Dorsolateral prefrontal cortex (tissue), 120 donors: ENCODE measurements at regions of chr6 and their contacts with region 1.

Region 1: GRCh38 chr6:41545703-41546474 is at the start of gene FOXP4:
- DNase-seq: peak; percentile 75 to 93 (median 89)
- H3K4me3 ChIP-seq: peak within 1 kb of the TSS; percentile 52 to 87 (median 74)
- H3K27ac ChIP-seq: peak within 1 kb of the TSS in 18 of 59 donors; percentile 13 to 78 (median 50)
- H3K27me3 ChIP-seq: peaks cover 0 to 24% (median 0%) of the 10 kb centered on the region in 45 donors
- CTCF ChIP-seq: peak in 11 of 56 donors; percentile 13 to 33 (median 22)
- total RNA-seq, gene FOXP4: 19.2 to 35.8 (median 25.0) TPM

Region 2: DNA sequence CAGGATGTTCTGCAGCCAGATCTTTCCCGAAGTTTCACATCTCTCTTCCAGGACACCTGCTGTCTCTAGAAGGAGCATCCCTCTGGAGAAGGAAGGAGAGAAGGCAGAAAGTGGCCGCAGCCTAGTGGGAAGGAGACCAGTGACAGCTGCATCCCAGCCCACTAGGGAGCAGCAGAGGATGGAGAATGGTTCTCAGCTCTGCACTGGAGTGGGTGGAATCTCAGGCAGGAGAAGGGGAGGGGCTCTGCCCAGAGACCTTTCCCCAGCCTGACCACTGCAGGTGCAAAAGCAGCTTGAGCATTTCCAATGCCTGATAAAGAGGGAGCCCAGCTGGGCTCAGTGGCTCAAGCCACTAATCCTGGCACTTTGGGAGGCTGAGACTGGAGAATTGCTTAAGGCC is 178.2 kb before region 1 on chr6:
- intact Hi-C with region 1: loop called (anchors 5 kb)
- DNase-seq: peak; percentile 49 to 79 (median 74)
- H3K4me3 ChIP-seq: no peak overlapping the region
- H3K27ac ChIP-seq: no peak overlapping the region
- H3K27me3 ChIP-seq: peaks cover 0 to 61% (median 30%) of the 10 kb centered on the region in 45 donors
- CTCF ChIP-seq: peak; percentile 19 to 91 (median 80)

Region 3: GRCh38 chr6:41424370-41425058 is 121.4 kb before region 1 on chr6:
- intact Hi-C with region 1: loop called (anchors 2 to 5 kb)
- DNase-seq: peak; percentile 59 to 93 (median 82)
- H3K4me3 ChIP-seq: no peak overlapping the region
- H3K27ac ChIP-seq: peak overlapping the region in 19 of 59 donors; percentile 1 to 95 (median 28)
- H3K27me3 ChIP-seq: peaks cover 0 to 14% (median 0%) of the 10 kb centered on the region in 45 donors
- CTCF ChIP-seq: peak; percentile 73 to 93 (median 87)

Region 4: DNA sequence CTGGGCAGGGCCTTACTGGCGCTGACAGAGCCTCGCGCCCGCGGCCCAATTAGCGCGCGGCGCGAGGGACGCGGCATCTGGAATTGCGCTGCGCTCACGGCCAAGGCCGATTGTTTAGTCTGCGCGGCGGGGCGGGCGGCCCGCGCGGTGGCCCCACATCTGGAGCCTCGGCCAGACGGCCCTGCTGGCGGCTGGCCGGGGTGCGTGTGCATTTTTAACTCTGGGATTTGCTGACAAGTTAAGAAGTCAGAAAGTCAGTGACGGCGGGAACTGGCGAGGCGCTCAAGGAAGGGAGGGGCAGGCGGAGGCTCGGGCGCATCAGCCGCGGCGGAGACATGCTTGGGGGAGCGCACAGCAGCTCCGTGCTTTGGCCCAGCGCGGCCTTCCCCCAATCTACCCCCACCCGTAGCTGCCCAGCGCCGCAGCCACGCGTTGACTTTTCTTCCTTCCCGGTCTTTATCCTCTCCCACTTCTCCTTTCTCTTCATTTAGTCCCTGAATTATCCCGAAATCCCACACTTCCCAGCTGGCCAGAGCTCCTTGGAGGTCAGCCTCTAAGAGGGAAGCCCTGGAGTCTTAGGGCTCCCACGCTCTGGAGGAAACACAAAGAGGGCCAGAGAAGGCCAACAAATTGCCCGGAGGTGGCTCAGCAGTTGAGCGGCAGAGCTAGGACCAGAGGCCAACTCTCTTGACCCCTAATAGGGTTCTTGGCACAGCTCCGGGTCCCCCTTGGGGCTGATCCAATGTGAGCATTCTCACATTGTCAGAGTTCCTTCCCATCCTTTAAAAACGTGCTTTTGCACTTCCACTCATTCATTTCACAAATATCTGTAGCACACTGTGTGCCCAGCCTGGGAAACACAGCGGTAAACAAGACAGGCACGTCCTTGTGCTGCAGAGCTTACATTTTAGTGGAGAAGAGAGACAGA is 40.5 kb before region 1 on chr6:
- intact Hi-C with region 1: loop called in 1 of 2 experiments (anchors 2 kb)
- DNase-seq: peak in 4 of 10 donors; percentile 8 to 54 (median 20)
- H3K4me3 ChIP-seq: peak overlapping the region in 58 of 59 donors; percentile 0 to 68 (median 48)
- H3K27ac ChIP-seq: peak overlapping the region in 10 of 59 donors; percentile 0 to 77 (median 34)
- H3K27me3 ChIP-seq: peaks cover 0 to 41% (median 8%) of the 10 kb centered on the region in 45 donors
- CTCF ChIP-seq: peak in 1 of 56 donors; percentile 19

Region 5: GRCh38 chr6:41584668-41585205 is 38.8 kb after region 1 on chr6:
- intact Hi-C with region 1: loop called in 1 of 2 experiments (anchors 5 kb)
- DNase-seq: no peak
- H3K4me3 ChIP-seq: no peak overlapping the region
- H3K27ac ChIP-seq: peak overlapping the region in 1 of 59 donors; percentile 36
- H3K27me3 ChIP-seq: no peaks in the 10 kb centered on the region
- CTCF ChIP-seq: no peak

Region 6: GRCh38 chr6:41591859-41592502 is 46.1 kb after region 1 on chr6:
- intact Hi-C with region 1: loop called (anchors 2 to 5 kb)
- DNase-seq: peak in 9 of 10 donors; percentile 70 to 84 (median 79)
- H3K4me3 ChIP-seq: no peak overlapping the region
- H3K27ac ChIP-seq: peak overlapping the region in 1 of 59 donors; percentile 19
- H3K27me3 ChIP-seq: no peaks in the 10 kb centered on the region
- CTCF ChIP-seq: peak; percentile 83 to 98 (median 94)

Region 7: DNA sequence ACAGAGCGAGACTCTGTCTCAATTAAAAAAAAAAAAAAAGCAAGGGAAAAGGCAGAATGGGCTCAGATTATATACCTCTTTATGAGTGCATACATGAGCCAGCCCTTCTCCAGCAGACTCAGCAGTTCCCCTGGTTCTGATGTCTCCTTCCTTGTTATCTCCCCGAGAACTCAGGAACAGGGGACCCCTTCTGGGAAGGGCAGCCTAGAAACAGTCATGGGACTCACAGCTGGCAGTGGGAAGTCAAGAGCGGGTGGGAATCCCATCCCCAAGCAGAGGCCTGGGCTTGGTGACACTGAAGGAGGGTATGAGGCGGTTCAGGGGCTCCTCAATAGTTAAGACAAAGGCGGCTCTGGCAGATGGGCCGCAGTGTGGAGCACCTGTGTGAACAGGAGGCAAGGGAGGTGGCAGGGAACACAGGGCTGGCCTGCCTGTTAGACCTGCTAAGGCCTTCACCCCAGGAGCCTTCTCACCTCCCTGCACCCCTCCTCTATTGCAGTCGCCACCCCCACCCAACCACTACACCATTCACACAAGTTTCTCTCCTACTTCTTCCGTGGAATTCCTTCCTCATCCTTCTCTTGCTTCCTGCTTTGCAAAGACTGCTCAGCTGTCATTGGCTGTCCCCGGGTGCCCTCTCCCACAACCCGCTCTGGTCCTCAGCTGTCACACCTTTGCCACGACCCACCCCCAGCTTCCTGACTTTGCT is 62.7 kb after region 1 on chr6:
- intact Hi-C with region 1: no loop called
- DNase-seq: no peak
- H3K4me3 ChIP-seq: no peak overlapping the region
- H3K27ac ChIP-seq: no peak overlapping the region
- H3K27me3 ChIP-seq: no peaks in the 10 kb centered on the region
- CTCF ChIP-seq: no peak

Region 8: GRCh38 chr6:41655711-41656691 is 110.1 kb after region 1 on chr6:
- intact Hi-C with region 1: no loop called
- DNase-seq: peak in 2 of 10 donors; percentile 10 to 71
- H3K4me3 ChIP-seq: no peak overlapping the region
- H3K27ac ChIP-seq: no peak overlapping the region
- H3K27me3 ChIP-seq: peaks cover 0 to 30% (median 2%) of the 10 kb centered on the region in 45 donors
- CTCF ChIP-seq: no peak

Region 9: GRCh38 chr6:41683510-41684310 is 137.8 kb after region 1 on chr6:
- intact Hi-C with region 1: loop called in 1 of 2 experiments (anchors 2 kb)
- DNase-seq: peak; percentile 70 to 88 (median 85)
- H3K4me3 ChIP-seq: peak overlapping the region in 58 of 59 donors; percentile 15 to 71 (median 54)
- H3K27ac ChIP-seq: peak overlapping the region; percentile 77 to 100 (median 95)
- H3K27me3 ChIP-seq: no peaks in the 10 kb centered on the region
- CTCF ChIP-seq: peak; percentile 83 to 98 (median 95)

Region 10: DNA sequence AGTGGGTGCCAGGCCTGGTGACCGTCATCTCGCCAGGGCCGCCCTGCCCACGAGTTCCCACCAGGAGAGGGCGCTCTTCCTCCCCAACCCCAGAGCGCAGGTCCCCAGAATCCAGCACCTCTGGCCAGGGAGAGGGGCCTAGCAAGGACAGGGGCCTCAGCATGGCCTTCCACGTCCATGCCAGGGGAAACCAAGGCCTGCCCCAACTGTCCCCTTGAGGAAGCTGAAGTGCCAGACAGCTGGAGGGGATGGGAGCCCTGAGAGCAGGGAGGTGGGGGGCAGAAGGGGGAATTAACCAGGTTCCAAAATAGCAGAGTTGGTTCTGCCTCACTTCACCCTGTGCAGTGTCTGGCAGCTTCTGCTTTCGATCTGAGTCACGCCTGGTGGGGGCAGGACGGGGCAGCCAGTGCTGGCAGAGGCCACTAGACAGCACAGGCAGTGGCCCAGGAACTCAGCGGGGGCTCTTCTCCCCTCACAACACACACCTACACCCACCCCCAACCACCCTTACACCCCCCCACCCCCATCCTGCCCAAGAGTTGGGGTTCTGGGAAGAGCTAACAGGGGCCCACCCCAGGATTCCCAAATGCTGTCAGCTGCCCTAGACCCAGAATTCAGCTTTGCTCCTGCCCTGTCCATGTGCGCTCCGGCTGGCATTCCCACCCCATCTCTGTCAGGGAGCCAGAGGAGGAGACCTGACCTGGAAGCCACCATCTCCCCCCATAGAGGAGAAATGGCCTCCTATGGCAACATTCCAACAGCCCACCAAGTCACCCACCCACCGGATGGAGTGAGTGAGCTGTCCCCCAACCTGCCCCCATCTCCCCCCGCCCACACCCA is 160.3 kb after region 1 on chr6:
- intact Hi-C with region 1: no loop called
- DNase-seq: peak; percentile 49 to 89 (median 84)
- H3K4me3 ChIP-seq: peak overlapping the region in 57 of 59 donors; percentile 24 to 73 (median 54)
- H3K27ac ChIP-seq: peak overlapping the region; percentile 89 to 100 (median 99)
- H3K27me3 ChIP-seq: no peaks in the 10 kb centered on the region
- CTCF ChIP-seq: peak; percentile 43 to 91 (median 76)